Heart right ventricle (tissue), 16 donors: ENCODE measurements at regions of chr1 and their contacts with region 1.

Region 1: DNA sequence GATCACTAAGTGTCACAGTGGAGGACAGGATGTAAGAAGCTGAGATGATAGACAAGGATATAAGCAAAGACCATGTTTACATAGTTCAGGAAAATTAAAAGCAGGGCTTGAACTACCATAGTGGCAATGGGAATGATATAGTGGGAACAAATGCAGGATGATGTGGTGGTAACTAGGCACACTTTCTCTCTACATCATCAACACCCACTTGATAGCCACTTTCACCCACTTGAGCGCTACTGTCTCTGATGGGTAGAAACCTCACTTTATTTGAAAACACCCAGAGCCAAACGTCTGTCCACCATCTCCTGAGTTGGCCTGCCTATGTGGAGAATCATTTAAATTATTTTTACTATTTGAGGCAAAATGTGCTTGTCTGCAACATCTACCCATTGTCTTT is 305.0 kb upstream of the ST6GALNAC5 start:
- DNase-seq: no peak
- ATAC-seq: no peak
- H3K4me3 ChIP-seq: no peak overlapping the region
- H3K27ac ChIP-seq: no peak overlapping the region
- H3K4me1 ChIP-seq: no peaks in the 10 kb centered on the region
- H3K27me3 ChIP-seq: no peaks in the 10 kb centered on the region
- CTCF ChIP-seq: no peak

Region 2: GRCh38 chr1:76510672-76511557 is 51.4 kb before region 1 on chr1:
- intact Hi-C with region 1: loop called in 1 of 10 experiments (anchors 5 kb)
- DNase-seq: no peak
- ATAC-seq: no peak
- H3K4me3 ChIP-seq: no peak overlapping the region
- H3K27ac ChIP-seq: no peak overlapping the region
- H3K4me1 ChIP-seq: peaks cover 0 to 13% (median 0%) of the 10 kb centered on the region in 9 donors
- H3K27me3 ChIP-seq: no peaks in the 10 kb centered on the region
- CTCF ChIP-seq: no peak